Activated naive CD4-positive, alpha-beta T cell treated with anti-CD3 and anti-CD28 coated beads for 36 hours (primary cell): ENCODE measurements at regions of chr12 and their contacts with region 1.

Region 1: DNA sequence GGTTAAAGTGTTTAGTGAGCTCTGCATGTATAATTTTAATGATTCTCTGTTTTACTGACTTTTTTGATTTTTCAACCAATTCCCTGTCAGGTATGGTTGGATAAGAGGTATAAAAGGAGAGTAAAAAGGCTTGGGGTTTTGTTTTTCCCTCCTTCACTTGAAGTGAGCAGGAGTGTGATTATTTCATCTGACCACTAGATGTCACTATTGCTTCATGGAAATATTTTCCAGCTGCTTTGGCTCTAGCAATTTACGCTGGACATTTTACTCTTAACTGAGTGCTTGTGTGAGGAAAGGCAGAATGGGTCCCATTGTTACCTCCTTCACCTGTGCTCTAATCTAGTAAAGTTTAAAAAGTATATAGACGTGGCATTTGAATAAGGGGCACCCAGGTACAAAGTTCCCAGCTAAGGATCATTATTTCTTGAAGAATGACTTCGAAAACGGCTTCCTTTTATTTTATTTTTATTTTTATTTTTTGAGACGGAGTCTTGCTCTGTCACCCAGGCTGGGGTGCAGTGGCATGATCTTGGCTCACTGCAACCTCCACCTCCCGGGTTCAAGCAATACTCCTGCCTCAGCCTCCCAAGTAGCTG is 66.5 kb downstream of the TBC1D30 start:
- DNase-seq: no peak
- H3K4me3 Mint-ChIP-seq: no peak overlapping the region
- H3K27ac Mint-ChIP-seq: no peak overlapping the region
- H3K4me1 Mint-ChIP-seq: peaks cover 4% of the 10 kb centered on the region
- H3K27me3 Mint-ChIP-seq: peaks cover 18% of the 10 kb centered on the region

Region 2: GRCh38 chr12:64796208-64796845 is 94.6 kb before region 1 on chr12:
- CTCF ChIA-PET with region 1: interaction called, 4 read pairs
- intact Hi-C with region 1: loop called (anchors 1 kb)
- DNase-seq: peak; percentile 76
- H3K4me3 Mint-ChIP-seq: no peak overlapping the region
- H3K27ac Mint-ChIP-seq: no peak overlapping the region
- H3K4me1 Mint-ChIP-seq: no peaks in the 10 kb centered on the region
- H3K27me3 Mint-ChIP-seq: peaks cover 6% of the 10 kb centered on the region

Region 3: GRCh38 chr12:65093606-65094005 is 202.6 kb after region 1 on chr12:
- CTCF ChIA-PET with region 1: no interaction called
- intact Hi-C with region 1: no loop called
- DNase-seq: no peak
- H3K4me3 Mint-ChIP-seq: no peak overlapping the region
- H3K27ac Mint-ChIP-seq: no peak overlapping the region
- H3K4me1 Mint-ChIP-seq: no peaks in the 10 kb centered on the region
- H3K27me3 Mint-ChIP-seq: peaks cover 27% of the 10 kb centered on the region

Region 4: GRCh38 chr12:65106948-65107347 is 216.0 kb after region 1 on chr12:
- CTCF ChIA-PET with region 1: interaction called, 6 read pairs
- intact Hi-C with region 1: loop called (anchors 1 kb)
- DNase-seq: no peak
- H3K4me3 Mint-ChIP-seq: no peak overlapping the region
- H3K27ac Mint-ChIP-seq: no peak overlapping the region
- H3K4me1 Mint-ChIP-seq: no peaks in the 10 kb centered on the region
- H3K27me3 Mint-ChIP-seq: peaks cover 2% of the 10 kb centered on the region

Region 5: DNA sequence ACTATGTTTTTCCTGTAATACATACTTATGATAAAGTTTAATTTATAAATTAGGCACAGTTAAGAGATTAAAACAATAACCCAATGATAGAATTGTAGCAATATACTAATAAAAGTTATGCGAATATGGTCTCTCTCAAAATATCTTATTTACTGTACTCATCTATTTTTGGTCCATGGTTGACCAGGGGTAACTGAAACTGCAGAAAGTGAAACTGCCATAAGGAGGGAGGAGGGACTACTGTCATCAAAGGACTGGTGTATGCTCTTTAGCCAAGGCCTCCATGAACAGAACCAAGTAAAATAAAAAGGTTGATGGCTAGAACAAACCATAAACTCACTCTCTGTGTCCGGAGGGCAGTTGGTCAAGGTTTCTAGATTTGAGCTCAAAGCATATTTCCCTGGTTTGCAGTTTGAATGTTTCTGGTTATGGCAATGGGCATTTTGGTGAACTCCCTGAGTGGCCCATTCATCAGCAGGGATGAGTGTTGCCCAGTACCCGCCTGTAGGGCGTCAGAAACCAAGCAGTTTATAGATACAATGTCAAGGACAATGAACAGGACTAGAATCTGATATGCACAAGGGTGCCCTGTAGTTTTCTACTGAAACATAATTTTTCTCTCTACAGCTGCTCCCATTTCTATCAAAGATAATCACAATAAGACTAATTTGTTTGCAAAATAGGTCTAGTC is 298.2 kb after region 1 on chr12:
- CTCF ChIA-PET with region 1: no interaction called
- intact Hi-C with region 1: no loop called
- DNase-seq: no peak
- H3K4me3 Mint-ChIP-seq: no peak overlapping the region
- H3K27ac Mint-ChIP-seq: no peak overlapping the region
- H3K4me1 Mint-ChIP-seq: peaks cover 58% of the 10 kb centered on the region
- H3K27me3 Mint-ChIP-seq: no peaks in the 10 kb centered on the region

Region 6: DNA sequence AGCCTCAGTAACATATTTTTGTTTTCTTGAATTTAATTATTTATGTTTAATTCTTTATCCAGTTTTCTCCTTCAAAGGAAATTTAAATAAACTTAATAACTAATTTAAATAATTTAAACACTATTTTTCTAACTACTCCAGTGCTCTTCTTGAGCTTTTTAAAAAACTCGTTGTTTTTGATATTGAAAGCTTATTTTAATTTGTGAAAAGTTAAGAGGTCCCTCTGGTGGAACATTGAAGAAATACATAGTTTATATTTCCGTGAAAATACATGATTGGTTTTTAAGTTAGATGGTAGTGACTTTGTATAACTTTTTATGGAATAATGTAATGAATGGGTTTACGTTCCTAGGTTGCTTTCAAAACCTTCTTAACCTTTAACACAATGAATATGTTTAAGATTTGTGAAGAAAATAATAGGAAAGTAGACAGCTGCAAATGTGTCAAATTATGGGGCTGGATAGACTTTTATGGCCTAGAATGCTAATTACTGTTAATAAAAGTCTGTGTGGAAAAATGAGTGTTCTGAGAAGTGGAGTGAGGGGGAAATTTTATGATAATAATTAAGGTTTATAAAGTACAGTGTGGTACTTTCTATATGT is 341.6 kb after region 1 on chr12:
- CTCF ChIA-PET with region 1: interaction called, 7 read pairs
- intact Hi-C with region 1: loop called (anchors 1 kb)
- DNase-seq: no peak
- H3K4me3 Mint-ChIP-seq: no peak overlapping the region
- H3K27ac Mint-ChIP-seq: no peak overlapping the region
- H3K4me1 Mint-ChIP-seq: peaks cover 11% of the 10 kb centered on the region
- H3K27me3 Mint-ChIP-seq: no peaks in the 10 kb centered on the region

Region 7: GRCh38 chr12:65313719-65314317 is 422.8 kb after region 1 on chr12:
- CTCF ChIA-PET with region 1: no interaction called
- intact Hi-C with region 1: no loop called
- DNase-seq: no peak
- H3K4me3 Mint-ChIP-seq: no peak overlapping the region
- H3K27ac Mint-ChIP-seq: no peak overlapping the region
- H3K4me1 Mint-ChIP-seq: peaks cover under 1% of the 10 kb centered on the region
- H3K27me3 Mint-ChIP-seq: peaks cover 4% of the 10 kb centered on the region

Region 8: DNA sequence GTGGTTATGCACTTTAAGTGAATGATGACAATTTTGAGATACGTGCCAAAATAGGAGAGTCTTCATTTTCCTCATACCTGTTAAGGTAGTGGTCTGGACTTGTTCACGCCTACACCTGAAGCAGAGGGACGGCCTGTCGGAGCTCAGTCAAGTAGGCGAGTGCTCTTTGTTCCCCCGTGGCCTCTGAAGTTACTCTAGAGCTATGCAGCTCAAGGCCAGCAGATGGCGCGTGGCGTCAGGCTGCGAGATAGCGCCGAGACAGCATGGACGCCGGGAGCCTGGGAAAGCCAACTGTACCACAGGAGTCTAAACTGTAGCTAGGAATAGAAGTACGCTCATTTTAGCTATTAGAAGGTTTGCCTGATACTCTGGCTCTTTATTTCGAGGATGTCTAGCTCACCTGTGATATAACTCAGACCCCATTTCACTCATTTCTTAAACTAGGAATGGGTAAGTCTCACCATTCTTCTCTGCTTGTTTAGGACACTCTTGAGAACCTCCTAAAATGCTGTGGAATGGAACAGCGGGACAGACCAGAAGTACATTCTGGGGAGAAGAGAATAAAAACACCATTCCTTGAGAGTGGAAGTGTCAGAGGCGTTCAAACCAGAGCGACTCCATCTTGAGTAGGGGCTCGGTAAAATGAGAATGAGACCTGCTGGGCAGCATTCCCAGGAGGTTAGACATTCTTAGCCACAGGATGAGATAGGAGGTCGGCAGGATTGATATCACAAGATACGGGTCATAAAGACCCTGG is 665.9 kb after region 1 on chr12:
- CTCF ChIA-PET with region 1: interaction called, 5 read pairs
- intact Hi-C with region 1: loop called (anchors 5 kb)
- DNase-seq: peak; percentile 79
- H3K4me3 Mint-ChIP-seq: no peak overlapping the region
- H3K27ac Mint-ChIP-seq: no peak overlapping the region
- H3K4me1 Mint-ChIP-seq: no peaks in the 10 kb centered on the region
- H3K27me3 Mint-ChIP-seq: peaks cover 17% of the 10 kb centered on the region

Region 9: GRCh38 chr12:65986047-65986446 is 1095.1 kb after region 1 on chr12:
- CTCF ChIA-PET with region 1: no interaction called
- intact Hi-C with region 1: loop called (anchors 5 kb)
- DNase-seq: no peak
- H3K4me3 Mint-ChIP-seq: no peak overlapping the region
- H3K27ac Mint-ChIP-seq: no peak overlapping the region
- H3K4me1 Mint-ChIP-seq: no peaks in the 10 kb centered on the region
- H3K27me3 Mint-ChIP-seq: peaks cover 5% of the 10 kb centered on the region

Region 10: DNA sequence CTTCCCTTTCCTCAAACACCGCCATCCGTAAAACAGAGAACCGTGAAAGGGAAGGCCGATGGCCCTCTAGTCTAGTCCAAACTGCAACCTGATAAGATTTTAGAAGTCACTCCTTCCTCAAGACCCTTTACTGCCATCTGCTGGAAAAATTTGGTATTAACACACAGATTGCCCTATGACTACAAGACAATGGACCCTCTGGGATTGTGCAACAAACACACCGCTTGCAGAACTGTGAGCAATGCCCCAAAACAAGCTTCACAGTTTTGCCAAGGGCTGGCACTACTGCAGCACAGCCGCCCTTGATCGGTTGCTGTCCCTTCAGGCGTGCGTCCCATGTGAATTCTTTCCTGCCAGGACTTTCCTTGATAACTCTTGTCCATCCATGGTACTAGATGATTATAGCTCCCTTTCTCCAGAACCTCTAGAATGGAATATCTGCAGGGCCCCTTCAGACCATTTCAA is 1216.5 kb after region 1 on chr12:
- CTCF ChIA-PET with region 1: interaction called, 3 read pairs
- intact Hi-C with region 1: loop called (anchors 1 kb)
- DNase-seq: peak; percentile 59
- H3K4me3 Mint-ChIP-seq: no peak overlapping the region
- H3K27ac Mint-ChIP-seq: no peak overlapping the region
- H3K4me1 Mint-ChIP-seq: peaks cover 4% of the 10 kb centered on the region
- H3K27me3 Mint-ChIP-seq: peaks cover 4% of the 10 kb centered on the region